Common myeloid progenitor, CD34-positive (primary cell): ENCODE measurements at regions of chr11 and their contacts with region 1.

Region 1: DNA sequence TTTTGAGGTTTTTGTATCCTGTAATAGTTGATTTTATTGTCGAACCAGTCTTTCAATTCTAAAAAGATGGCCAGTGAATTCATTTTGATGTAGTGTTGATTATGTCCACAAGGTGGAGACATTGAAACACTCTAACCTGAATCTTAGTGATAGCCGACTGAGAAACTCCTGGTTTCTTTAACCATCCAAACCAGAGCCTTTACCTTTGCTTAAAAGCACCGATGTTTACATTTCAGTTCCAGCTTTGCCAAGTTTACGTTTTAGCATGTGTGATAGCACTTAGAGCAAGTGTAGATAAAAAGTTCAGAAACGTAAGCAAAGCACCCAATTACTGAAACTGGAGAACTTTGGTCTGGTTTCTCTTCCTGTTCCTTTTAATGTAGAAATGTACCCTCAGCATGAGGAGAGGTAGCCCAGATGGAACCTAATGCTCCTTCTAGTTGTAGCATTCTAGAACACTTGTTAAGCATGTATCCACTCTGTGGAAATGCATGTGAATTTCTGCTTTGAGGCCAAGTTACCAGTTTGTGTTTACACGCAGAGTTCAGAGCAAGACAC is 208.6 kb downstream of the DBX1 start:
- DNase-seq: peak; percentile 39 to 66 (median 60)
- H3K4me3 ChIP-seq: peak overlapping the region in 5 of 7 experiments; percentile 33 to 63 (median 57)
- H3K27ac ChIP-seq: no peak overlapping the region
- H3K4me1 ChIP-seq: peaks cover 0 to 3% (median 0%) of the 10 kb centered on the region in 4 experiments
- H3K27me3 ChIP-seq: peaks cover 0 to 4% (median 0%) of the 10 kb centered on the region in 5 experiments

Region 2: GRCh38 chr11:19846654-19847305 is 104.9 kb before region 1 on chr11:
- CTCF ChIA-PET with region 1: no interaction called
- POLR2A ChIA-PET with region 1: no interaction called
- DNase-seq: peak in 1 of 3 donors; percentile 12
- H3K4me3 ChIP-seq: no peak overlapping the region
- H3K27ac ChIP-seq: no peak overlapping the region
- H3K4me1 ChIP-seq: no peaks in the 10 kb centered on the region
- H3K27me3 ChIP-seq: peaks cover 0 to 4% (median 0%) of the 10 kb centered on the region in 5 experiments

Region 3: DNA sequence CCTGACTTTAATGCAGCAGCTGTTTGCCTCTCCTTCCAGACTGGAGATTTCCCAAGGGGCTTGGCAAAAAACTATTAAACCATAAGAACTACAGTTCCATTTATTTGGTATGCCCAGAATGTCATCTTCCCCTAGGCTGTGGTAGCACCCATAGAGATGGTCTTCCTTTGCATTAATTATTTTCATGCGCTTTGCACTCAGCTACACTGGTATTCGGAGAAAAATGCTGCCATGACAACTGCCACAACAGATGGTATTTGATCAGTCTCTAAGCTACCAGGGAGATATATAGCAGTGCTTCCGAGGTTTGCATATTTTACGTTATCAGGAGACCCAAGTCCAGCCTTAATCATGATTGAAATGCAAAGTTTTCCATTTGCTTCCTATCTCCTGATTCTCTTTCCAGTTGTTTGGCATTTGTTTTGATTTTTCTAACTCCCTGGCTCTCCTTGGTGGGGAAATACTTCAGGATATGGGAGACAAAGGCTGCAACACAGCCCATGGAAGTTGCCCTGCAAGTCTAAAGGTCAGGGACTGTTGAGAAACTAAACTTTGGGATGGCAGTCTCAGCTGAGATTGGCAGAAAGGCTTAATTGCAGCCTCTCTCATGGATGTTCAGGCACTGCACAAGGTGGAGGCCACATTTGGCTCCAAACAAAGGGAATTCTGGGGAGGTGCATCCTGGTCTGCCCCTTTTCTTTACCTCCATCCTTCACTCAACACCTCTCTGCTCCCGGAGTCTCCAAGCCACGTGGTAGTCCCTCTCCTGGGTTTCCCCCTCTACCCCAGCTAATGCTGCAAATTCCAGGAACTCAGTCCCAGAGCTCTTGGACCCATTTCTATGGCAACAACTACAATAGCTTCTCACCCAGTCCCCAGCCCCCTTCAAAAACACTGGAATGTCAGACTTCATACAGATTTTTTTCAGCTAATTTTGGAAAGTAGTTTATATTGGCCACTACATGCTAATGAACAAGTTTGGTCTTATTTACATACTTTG is 87.2 kb before region 1 on chr11:
- CTCF ChIA-PET with region 1: no interaction called
- POLR2A ChIA-PET with region 1: no interaction called
- DNase-seq: no peak
- H3K4me3 ChIP-seq: no peak overlapping the region
- H3K27ac ChIP-seq: no peak overlapping the region
- H3K4me1 ChIP-seq: no peaks in the 10 kb centered on the region
- H3K27me3 ChIP-seq: no peaks in the 10 kb centered on the region

Region 4: DNA sequence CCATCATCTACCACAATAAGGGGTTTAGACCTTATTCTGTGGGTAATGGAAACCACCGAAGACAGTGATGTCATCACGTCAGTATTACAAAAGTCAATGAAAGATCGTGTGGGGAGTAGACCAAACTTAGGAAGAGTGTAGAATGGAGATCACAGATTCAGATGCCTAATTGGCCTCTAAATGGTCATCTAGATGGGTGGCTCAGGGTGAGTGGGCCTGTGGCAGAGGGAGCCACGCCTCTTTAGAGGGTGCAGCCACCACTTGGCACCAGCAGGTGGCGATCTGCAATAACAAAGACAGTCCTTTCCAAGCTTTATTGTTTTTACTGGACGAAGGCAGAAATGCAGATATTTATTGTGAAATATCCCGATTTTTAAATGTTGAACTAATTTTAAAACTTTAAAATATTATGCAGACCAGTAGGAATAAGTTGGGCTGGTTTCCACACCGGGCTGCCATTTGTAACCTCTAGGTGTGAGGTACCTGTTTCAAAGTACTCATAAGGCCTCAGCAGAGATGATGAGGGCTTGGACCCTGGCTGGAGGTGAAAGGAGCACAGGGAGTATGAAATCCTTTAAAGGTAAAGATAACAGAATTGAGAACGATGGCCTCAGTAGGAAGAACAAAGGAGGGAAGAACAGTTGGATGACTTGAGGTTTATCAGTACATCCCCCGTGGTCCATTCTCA is 13.3 kb before region 1 on chr11:
- CTCF ChIA-PET with region 1: interaction called, 25 read pairs
- POLR2A ChIA-PET with region 1: no interaction called
- DNase-seq: peak; percentile 32 to 62 (median 53)
- H3K4me3 ChIP-seq: no peak overlapping the region
- H3K27ac ChIP-seq: no peak overlapping the region
- H3K4me1 ChIP-seq: no peaks in the 10 kb centered on the region
- H3K27me3 ChIP-seq: no peaks in the 10 kb centered on the region

Region 5: GRCh38 chr11:20105427-20105826 is 153.8 kb after region 1 on chr11:
- CTCF ChIA-PET with region 1: interaction called, 35 read pairs
- POLR2A ChIA-PET with region 1: no interaction called
- DNase-seq: no peak
- H3K4me3 ChIP-seq: no peak overlapping the region
- H3K27ac ChIP-seq: no peak overlapping the region
- H3K4me1 ChIP-seq: no peaks in the 10 kb centered on the region
- H3K27me3 ChIP-seq: peaks cover 0 to 4% (median 0%) of the 10 kb centered on the region in 5 experiments

Region 6: GRCh38 chr11:20110908-20111669 is 159.5 kb after region 1 on chr11:
- CTCF ChIA-PET with region 1: interaction called, 35 read pairs
- POLR2A ChIA-PET with region 1: no interaction called
- DNase-seq: peak; percentile 50 to 65 (median 64)
- H3K4me3 ChIP-seq: no peak overlapping the region
- H3K27ac ChIP-seq: no peak overlapping the region
- H3K4me1 ChIP-seq: peaks cover 0 to 12% (median 0%) of the 10 kb centered on the region in 4 experiments
- H3K27me3 ChIP-seq: peaks cover 0 to 2% (median 0%) of the 10 kb centered on the region in 5 experiments